H1 (cell line): ENCODE measurements at regions of chr12 and their contacts with region 1.

Region 1: DNA sequence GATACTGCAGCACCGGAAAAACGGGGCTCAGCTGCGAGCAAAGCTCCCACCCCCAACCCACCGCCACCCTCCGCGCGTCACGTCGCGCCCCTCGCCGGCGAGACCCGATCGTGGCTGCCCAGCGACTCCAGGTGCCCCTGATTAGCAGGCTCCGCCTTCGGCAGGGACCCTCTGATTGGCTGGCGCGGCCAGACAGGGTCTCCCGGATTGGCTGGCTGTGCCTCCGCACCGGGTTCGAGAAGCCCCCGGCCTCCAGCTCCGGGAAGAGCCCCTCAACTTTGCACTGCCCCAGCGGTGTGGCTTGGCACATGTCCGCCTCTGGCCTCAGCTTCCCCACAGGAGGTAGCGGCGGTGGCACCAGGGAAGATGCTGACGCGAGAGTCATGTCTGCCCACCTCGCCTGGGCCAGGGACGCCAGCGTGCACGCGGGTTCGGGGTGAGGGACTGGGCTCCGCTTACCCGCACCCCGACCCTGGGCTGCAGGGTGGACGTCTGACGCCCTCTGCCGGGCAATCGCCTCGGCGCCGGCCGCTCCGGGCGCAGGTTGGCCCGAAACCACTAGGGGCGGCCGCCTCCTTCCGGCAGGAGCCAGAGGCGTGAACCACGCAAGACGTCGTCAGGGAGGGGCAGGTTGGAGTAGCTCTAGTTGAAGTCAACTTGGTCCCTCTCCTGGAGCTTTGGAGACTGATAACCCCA is 498 bp upstream of the RHOF start:
- DNase-seq: peak; percentile 87 to 98
- H3K4me3 ChIP-seq: peak overlapping the region; percentile 60 to 91 (median 66)
- H3K27ac ChIP-seq: no peak overlapping the region
- H3K4me1 ChIP-seq: peaks cover 11 to 38% (median 24%) of the 10 kb centered on the region in 4 experiments
- H3K27me3 ChIP-seq: peaks cover 0 to 5% (median 1%) of the 10 kb centered on the region in 4 experiments; a peak in 2 of 7 replicates
- CTCF ChIP-seq: peak in 2 of 3 experiments; percentile 100; a peak in 3 of 4 replicates
- EP300 ChIP-seq: peak; percentile 34 to 40; a peak in 2 of 3 replicates
- POLR2A ChIP-seq: no peak; a peak in 1 of 3 replicates
- RAD21 ChIP-seq: peak; percentile 85 to 91

Region 2: DNA sequence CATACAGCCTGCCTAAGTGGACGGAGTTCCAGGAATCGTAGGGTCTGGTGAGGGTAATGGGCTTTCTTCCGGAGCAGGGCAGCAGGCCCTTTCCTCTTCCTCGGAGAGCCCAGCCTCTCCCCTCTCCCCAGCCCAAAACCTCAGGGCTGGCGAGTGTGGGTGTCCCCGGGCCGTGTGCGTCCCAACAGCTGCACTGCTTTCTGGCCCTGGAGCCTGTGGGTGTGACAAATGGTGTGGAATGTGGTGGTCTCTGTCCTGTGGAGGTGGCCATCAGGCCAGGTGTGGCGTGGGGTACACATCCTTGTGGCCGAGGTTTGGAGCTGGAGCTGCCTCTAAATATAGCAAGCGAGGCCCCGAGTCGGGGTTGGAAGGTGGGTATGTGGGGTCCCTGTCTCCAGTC is 159.2 kb before region 1 on chr12:
- CTCF ChIA-PET with region 1: no interaction called
- POLR2A ChIA-PET with region 1: no interaction called
- DNase-seq: no peak
- H3K4me3 ChIP-seq: no peak overlapping the region
- H3K27ac ChIP-seq: no peak overlapping the region
- H3K4me1 ChIP-seq: peaks cover 2 to 16% (median 9%) of the 10 kb centered on the region in 4 experiments; a peak in 6 of 7 replicates
- H3K27me3 ChIP-seq: no peaks in the 10 kb centered on the region
- CTCF ChIP-seq: no peak
- EP300 ChIP-seq: no peak
- POLR2A ChIP-seq: no peak
- RAD21 ChIP-seq: no peak

Region 3: GRCh38 chr12:121697098-121697698 is 96.8 kb before region 1 on chr12:
- CTCF ChIA-PET with region 1: interaction called, 38 read pairs
- POLR2A ChIA-PET with region 1: interaction called, 6 read pairs
- DNase-seq: no peak
- H3K4me3 ChIP-seq: no peak overlapping the region
- H3K27ac ChIP-seq: no peak overlapping the region
- H3K4me1 ChIP-seq: no peaks in the 10 kb centered on the region
- H3K27me3 ChIP-seq: no peaks in the 10 kb centered on the region
- CTCF ChIP-seq: peak in 2 of 3 experiments; percentile 12 to 31; a peak in 2 of 4 replicates
- EP300 ChIP-seq: no peak
- POLR2A ChIP-seq: no peak
- RAD21 ChIP-seq: peak; percentile 57

Region 4: GRCh38 chr12:121719926-121720414 is 74.0 kb before region 1 on chr12:
- CTCF ChIA-PET with region 1: interaction called, 27 read pairs
- POLR2A ChIA-PET with region 1: no interaction called
- DNase-seq: no peak
- H3K4me3 ChIP-seq: no peak overlapping the region
- H3K27ac ChIP-seq: no peak overlapping the region
- H3K4me1 ChIP-seq: peaks cover 0 to 4% (median 0%) of the 10 kb centered on the region in 4 experiments; a peak in 1 of 7 replicates
- H3K27me3 ChIP-seq: no peaks in the 10 kb centered on the region
- CTCF ChIP-seq: no peak
- EP300 ChIP-seq: no peak
- POLR2A ChIP-seq: no peak
- RAD21 ChIP-seq: no peak

Region 5: GRCh38 chr12:121773011-121773777 is 20.8 kb before region 1 on chr12:
- CTCF ChIA-PET with region 1: interaction called, 335 read pairs
- POLR2A ChIA-PET with region 1: interaction called, 958 read pairs
- DNase-seq: peak in 1 of 2 experiments; percentile 89
- H3K4me3 ChIP-seq: no peak overlapping the region
- H3K27ac ChIP-seq: no peak overlapping the region
- H3K4me1 ChIP-seq: peaks cover 0 to 18% (median 14%) of the 10 kb centered on the region in 4 experiments; a peak in 6 of 7 replicates
- H3K27me3 ChIP-seq: no peaks in the 10 kb centered on the region
- CTCF ChIP-seq: peak; percentile 95 to 98 (median 96)
- EP300 ChIP-seq: no peak
- POLR2A ChIP-seq: no peak
- RAD21 ChIP-seq: peak; percentile 91 to 95

Region 6: GRCh38 chr12:121839106-121839992 is 45.4 kb after region 1 on chr12:
- CTCF ChIA-PET with region 1: interaction called, 111 read pairs
- POLR2A ChIA-PET with region 1: interaction called, 7 read pairs
- DNase-seq: peak; percentile 96 to 100
- H3K4me3 ChIP-seq: peak overlapping the region; percentile 65 to 87 (median 75)
- H3K27ac ChIP-seq: peak overlapping the region; percentile 75; the same call in 1 of the 2 replicates
- H3K4me1 ChIP-seq: no peaks in the 10 kb centered on the region; a peak in 2 of 7 replicates
- H3K27me3 ChIP-seq: no peaks in the 10 kb centered on the region
- CTCF ChIP-seq: peak; percentile 29 to 48 (median 40)
- EP300 ChIP-seq: no peak
- POLR2A ChIP-seq: peak; percentile 59 to 75
- RAD21 ChIP-seq: peak in 1 of 2 experiments; percentile 24; a peak in 1 of 4 replicates

Region 7: GRCh38 chr12:121888478-121889266 is 94.7 kb after region 1 on chr12 and contains the start of gene PSMD9:
- CTCF ChIA-PET with region 1: interaction called, 114 read pairs
- POLR2A ChIA-PET with region 1: interaction called, 115 read pairs
- DNase-seq: peak; percentile 94 to 99
- H3K4me3 ChIP-seq: peak within 1 kb of the TSS; percentile 64 to 79 (median 74)
- H3K27ac ChIP-seq: peak within 1 kb of the TSS; percentile 83; the same call in 1 of the 2 replicates
- H3K4me1 ChIP-seq: peaks cover 0 to 5% (median 1%) of the 10 kb centered on the region in 4 experiments; a peak in 4 of 7 replicates
- H3K27me3 ChIP-seq: peaks cover 0 to 2% (median 1%) of the 10 kb centered on the region in 4 experiments; a peak in 3 of 7 replicates
- CTCF ChIP-seq: peak; percentile 59 to 83 (median 75)
- EP300 ChIP-seq: peak in 1 of 2 experiments; percentile 86; a peak in 1 of 3 replicates
- POLR2A ChIP-seq: peak in 1 of 2 experiments; percentile 75; a peak in 2 of 3 replicates
- RAD21 ChIP-seq: peak; percentile 52 to 68
- total RNA-seq, gene PSMD9: 28.8 and 33.1 TPM in 2 replicates